Activated T-helper 2 cell treated with anti-CD3 and anti-CD28 coated beads, Interferon-gamma antibody, Interleukin-2, Interleukin-4, amounts not matched to agents 10 μg/mL and 5 μg/mL and 100 μg/mL, durations not matched to agents 14 hours and 24 hours and 36 hours (primary cell): ENCODE measurements at regions of chr1 and their contacts with region 1.

Region 1: DNA sequence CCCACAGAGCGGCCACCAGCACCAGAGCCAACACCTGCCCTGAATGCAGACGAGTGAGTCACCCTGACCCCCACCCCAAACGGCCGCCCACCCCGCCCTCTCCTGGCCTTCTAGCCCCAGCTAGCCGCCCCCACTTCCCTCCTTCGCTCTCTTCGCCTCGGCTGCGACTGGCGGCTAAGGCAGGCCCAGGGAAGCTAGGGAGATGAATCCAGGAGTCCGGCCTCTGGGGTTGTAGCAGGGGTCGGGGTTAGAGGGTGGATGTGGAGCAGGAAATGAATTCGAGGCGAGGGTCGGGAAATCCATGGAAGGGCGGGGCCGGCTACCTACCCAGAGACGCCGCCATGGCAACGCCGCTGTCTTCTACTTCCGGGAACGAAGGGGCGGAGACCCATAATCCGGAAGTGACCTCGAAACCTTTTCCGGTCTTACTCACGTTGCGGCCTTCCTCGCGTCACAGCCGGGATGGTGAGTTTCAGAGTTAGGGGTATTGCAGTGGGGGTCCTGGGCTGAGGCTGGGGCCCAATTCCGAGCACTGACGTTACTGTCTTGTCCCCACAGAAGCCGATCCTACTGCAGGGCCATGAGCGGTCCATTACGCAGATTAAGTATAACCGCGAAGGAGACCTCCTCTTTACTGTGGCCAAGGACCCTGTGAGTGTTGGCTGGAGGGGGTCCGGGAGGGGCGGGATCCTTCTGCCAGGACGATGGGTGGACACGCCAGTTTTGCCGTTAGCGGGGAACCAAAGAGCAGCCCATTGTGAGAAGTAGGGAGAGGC is at the starts of genes EIF3I and TMEM234:
- DNase-seq: peak; percentile 88
- H3K4me3 Mint-ChIP-seq: peak within 1 kb of the TSS; percentile 94
- H3K27ac Mint-ChIP-seq: peak within 1 kb of the TSS; percentile 95
- H3K4me1 Mint-ChIP-seq: peaks cover 28% of the 10 kb centered on the region
- H3K27me3 Mint-ChIP-seq: no peaks in the 10 kb centered on the region
- total RNA-seq, gene EIF3I: 287 and 293 TPM in 2 replicates
- total RNA-seq, gene TMEM234: 10.7 and 12.1 TPM in 2 replicates

Region 2: GRCh38 chr1:31977385-31978131 is 244.6 kb before region 1 on chr1:
- intact Hi-C with region 1: no loop called
- DNase-seq: no peak
- H3K4me3 Mint-ChIP-seq: no peak overlapping the region
- H3K27ac Mint-ChIP-seq: no peak overlapping the region
- H3K4me1 Mint-ChIP-seq: peaks cover 17% of the 10 kb centered on the region
- H3K27me3 Mint-ChIP-seq: no peaks in the 10 kb centered on the region

Region 3: DNA sequence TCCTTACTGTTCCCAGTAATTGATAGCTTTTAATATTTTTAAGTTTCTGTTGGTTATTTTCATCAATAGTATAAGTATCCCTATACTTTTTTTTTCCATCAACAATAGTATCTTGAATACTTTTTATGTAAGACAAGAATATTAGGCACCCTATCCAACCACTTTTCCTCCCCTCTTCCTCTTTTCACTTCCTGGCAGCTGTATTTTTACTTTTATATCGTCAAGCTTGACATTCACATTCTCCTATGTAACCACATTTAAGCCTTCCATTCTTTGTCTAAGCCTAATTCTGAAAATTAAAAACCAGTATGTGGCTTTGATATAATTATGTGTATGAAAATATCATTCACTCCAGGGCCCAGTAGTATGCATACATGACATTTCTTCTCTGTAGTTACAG is 140.1 kb before region 1 on chr1:
- intact Hi-C with region 1: no loop called
- DNase-seq: no peak
- H3K4me3 Mint-ChIP-seq: no peak overlapping the region
- H3K27ac Mint-ChIP-seq: no peak overlapping the region
- H3K4me1 Mint-ChIP-seq: peaks cover 6% of the 10 kb centered on the region
- H3K27me3 Mint-ChIP-seq: no peaks in the 10 kb centered on the region

Region 4: GRCh38 chr1:32291708-32292492 is 69.7 kb after region 1 on chr1 and contains the start of gene HDAC1:
- intact Hi-C with region 1: loop called (anchors 2 kb)
- DNase-seq: peak; percentile 96
- H3K4me3 Mint-ChIP-seq: peak within 1 kb of the TSS; percentile 94
- H3K27ac Mint-ChIP-seq: peak within 1 kb of the TSS; percentile 99
- H3K4me1 Mint-ChIP-seq: peaks cover 34% of the 10 kb centered on the region
- H3K27me3 Mint-ChIP-seq: no peaks in the 10 kb centered on the region
- total RNA-seq, gene HDAC1: 179 and 195 TPM in 2 replicates

Region 5: GRCh38 chr1:32394141-32394889 is 172.1 kb after region 1 on chr1 and contains the start of gene BSDC1:
- intact Hi-C with region 1: loop called (anchors 2 kb)
- DNase-seq: peak; percentile 98
- H3K4me3 Mint-ChIP-seq: peak within 1 kb of the TSS; percentile 99
- H3K27ac Mint-ChIP-seq: peak within 1 kb of the TSS; percentile 99
- H3K4me1 Mint-ChIP-seq: peaks cover 12% of the 10 kb centered on the region
- H3K27me3 Mint-ChIP-seq: peaks cover 10% of the 10 kb centered on the region
- total RNA-seq, gene BSDC1: 48.9 and 54.3 TPM in 2 replicates